ENCODE measurements at regions of chrX and their contacts with region 1.

Region 1: GRCh38 chrX:115940888-115941332 is 229.6 kb upstream of the AGTR2 start:
- DNase-seq: peak; percentile 92
- H3K4me3 ChIP-seq: peak overlapping the region in 1 of 4 donors; percentile 26
- H3K27ac ChIP-seq: peak overlapping the region in 1 of 4 donors; percentile 58
- H3K4me1 ChIP-seq: peaks cover 0 to 7% (median 3%) of the 10 kb centered on the region in 4 donors
- H3K27me3 ChIP-seq: no peaks in the 10 kb centered on the region
- CTCF ChIP-seq: peak in 1 of 4 experiments; percentile 45
- EP300 ChIP-seq: no peak
- POLR2A ChIP-seq: no peak

Region 2: DNA sequence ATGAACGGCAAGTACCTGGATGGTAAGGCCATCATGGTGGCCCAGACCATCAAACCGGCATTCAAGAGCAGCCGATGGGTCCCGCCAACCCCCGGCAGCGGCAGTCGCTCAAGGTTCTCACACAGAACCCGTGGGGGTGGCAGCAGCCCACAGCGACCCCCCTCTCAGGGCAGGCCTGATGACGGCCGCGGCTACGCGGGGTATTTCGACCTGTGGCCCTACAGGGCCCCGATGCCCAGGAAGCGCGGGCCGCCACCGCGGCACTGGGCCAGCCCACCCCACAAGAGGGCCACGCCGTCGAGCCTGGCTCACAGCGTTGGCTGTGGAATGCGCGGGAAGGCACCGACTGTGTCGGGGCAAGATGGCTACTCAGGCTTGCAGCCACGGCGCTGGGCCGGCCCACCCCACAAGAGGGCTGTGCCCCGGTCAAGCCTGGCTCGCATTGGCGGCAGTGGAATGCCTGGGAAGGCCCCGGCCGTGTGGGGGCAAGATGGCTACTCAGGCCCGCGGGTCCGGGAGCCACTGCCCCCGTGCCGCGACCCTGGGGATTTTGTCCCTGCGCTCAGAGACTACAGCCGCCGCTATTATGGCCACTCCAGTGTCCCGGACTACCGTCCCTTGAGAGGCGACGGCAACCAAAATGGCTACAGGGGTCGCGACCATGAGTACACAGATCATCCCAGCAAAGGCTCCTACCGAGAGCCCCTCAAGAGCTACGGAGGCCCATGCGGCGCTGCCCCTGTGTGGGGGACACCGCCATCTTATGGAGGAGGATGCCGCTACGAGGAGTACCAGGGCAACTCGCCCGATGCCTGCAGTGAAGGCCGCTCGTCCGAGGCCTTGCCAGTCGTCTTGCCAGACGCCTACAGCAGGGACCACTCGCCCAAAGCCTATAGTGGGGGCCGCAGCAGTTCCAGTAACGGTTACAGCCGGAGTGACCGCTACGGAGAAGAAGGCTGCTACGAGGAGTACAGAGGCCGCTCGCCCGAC is 751.0 kb before region 1 on chrX:
- intact Hi-C with region 1: no loop called
- DNase-seq: peak; percentile 63
- H3K4me3 ChIP-seq: no peak overlapping the region
- H3K27ac ChIP-seq: no peak overlapping the region
- H3K4me1 ChIP-seq: peaks cover 0 to 11% (median 2%) of the 10 kb centered on the region in 4 donors
- H3K27me3 ChIP-seq: no peaks in the 10 kb centered on the region
- CTCF ChIP-seq: no peak
- EP300 ChIP-seq: no peak
- POLR2A ChIP-seq: no peak

Region 3: DNA sequence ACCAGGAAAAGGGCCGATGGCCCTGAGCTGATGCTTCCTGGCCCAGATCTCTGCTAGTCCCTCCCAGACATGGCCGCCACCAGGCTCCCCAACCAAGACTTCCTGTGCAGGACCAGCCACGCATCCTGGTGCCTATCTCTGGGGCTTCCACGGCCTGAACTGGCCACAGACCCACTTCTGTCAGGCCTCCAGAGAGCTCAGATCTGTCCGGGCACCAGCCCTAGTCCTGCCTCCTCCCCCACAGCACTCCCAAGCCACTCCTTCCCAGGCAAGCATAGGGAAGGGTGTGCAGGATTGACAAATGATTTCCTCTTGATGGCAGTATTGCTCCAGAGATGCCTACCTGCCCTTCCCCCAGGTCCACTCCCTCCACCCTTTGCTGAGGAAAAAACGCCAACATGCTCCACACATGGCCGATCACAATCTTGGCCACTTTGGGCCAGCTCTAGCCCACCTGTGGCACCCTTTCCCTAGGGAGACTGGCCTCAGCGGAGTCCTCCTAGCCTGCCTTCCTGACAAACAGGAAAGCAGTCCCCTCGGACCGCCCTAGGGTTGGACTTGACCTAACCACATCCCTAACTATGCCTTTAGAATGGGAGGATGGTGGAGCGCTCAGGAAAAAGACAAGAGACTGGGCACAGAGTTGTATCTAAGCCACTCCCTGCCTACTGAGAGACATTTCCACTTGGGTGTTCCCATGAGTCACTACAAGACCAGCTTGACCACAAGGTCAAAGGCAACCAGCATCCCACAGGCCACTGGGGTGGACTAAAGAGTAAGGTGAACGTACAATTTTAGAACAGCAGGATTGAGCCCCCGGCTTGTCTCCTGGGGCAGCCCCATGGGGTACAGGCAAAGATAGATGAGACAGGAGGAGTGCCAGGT is 47.9 kb before region 1 on chrX:
- intact Hi-C with region 1: loop called (anchors 10 kb)
- DNase-seq: peak; percentile 80
- H3K4me3 ChIP-seq: peak overlapping the region in 1 of 4 donors; percentile 40
- H3K27ac ChIP-seq: peak overlapping the region in 2 of 4 donors; percentile 54 to 63
- H3K4me1 ChIP-seq: peaks cover 0 to 13% (median 0%) of the 10 kb centered on the region in 4 donors
- H3K27me3 ChIP-seq: no peaks in the 10 kb centered on the region
- CTCF ChIP-seq: peak in 1 of 4 experiments; percentile 65
- EP300 ChIP-seq: no peak
- POLR2A ChIP-seq: no peak

Region 4: GRCh38 chrX:115972717-115973116 is 31.8 kb after region 1 on chrX:
- intact Hi-C with region 1: no loop called
- DNase-seq: no peak
- H3K4me3 ChIP-seq: no peak overlapping the region
- H3K27ac ChIP-seq: peak overlapping the region in 3 of 4 donors; percentile 53 to 68 (median 65)
- H3K4me1 ChIP-seq: peaks cover 0 to 16% (median 7%) of the 10 kb centered on the region in 4 donors
- H3K27me3 ChIP-seq: peaks cover 0 to 4% (median 0%) of the 10 kb centered on the region in 3 donors
- CTCF ChIP-seq: no peak
- EP300 ChIP-seq: no peak
- POLR2A ChIP-seq: no peak

Region 5: GRCh38 chrX:115988825-115989224 is 47.9 kb after region 1 on chrX:
- intact Hi-C with region 1: loop called (anchors 10 kb)
- DNase-seq: no peak
- H3K4me3 ChIP-seq: no peak overlapping the region
- H3K27ac ChIP-seq: no peak overlapping the region
- H3K4me1 ChIP-seq: peaks cover 0 to 6% (median 0%) of the 10 kb centered on the region in 4 donors
- H3K27me3 ChIP-seq: no peaks in the 10 kb centered on the region
- CTCF ChIP-seq: no peak
- EP300 ChIP-seq: no peak
- POLR2A ChIP-seq: no peak

Measured in sigmoid colon (tissue), 7 donors.